Heart left ventricle (tissue), 16 donors: ENCODE measurements at regions of chr12 and their contacts with region 1.

Region 1: GRCh38 chr12:57452937-57453509 is 2.1 kb upstream of the INHBE start:
- DNase-seq: peak; percentile 83 to 89 (median 87)
- ATAC-seq: peak; percentile 75 to 86 (median 82)
- H3K4me3 ChIP-seq: no peak overlapping the region
- H3K27ac ChIP-seq: peak overlapping the region; percentile 61 to 96 (median 84)
- H3K4me1 ChIP-seq: peaks cover 0 to 31% (median 12%) of the 10 kb centered on the region in 12 donors
- H3K27me3 ChIP-seq: no peaks in the 10 kb centered on the region
- CTCF ChIP-seq: peak; percentile 79 to 96 (median 90)
- POLR2A ChIP-seq: no peak

Region 2: DNA sequence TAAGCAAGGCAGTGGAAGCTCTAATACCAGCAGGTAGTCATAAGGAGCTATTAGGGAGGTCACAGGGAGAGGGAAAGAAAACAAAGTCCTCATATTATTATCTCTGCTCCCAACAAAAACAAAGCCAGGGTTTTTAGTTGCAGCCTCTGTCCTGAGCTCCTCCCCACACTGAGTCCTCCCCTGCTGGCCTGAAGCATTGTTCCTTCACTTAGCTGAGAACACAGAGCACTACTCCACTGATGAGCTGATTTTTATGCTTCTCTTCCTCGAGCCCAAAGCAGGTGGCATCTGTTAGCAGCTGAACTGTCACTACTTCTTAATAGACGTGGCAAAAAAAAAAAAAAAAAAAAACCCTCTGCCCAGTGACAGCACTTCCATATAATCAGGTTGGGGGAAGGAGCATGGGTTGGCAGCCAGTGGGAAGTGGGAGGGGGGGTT is 191.6 kb before region 1 on chr12:
- intact Hi-C with region 1: loop called in 9 of 10 experiments (anchors 2 to 5 kb)
- DNase-seq: no peak
- ATAC-seq: peak; percentile 40 to 55 (median 43)
- H3K4me3 ChIP-seq: no peak overlapping the region
- H3K27ac ChIP-seq: peak overlapping the region; percentile 51 to 89 (median 80)
- H3K4me1 ChIP-seq: peaks cover 0 to 57% (median 22%) of the 10 kb centered on the region in 12 donors
- H3K27me3 ChIP-seq: no peaks in the 10 kb centered on the region
- CTCF ChIP-seq: no peak
- POLR2A ChIP-seq: no peak

Region 3: GRCh38 chr12:57268264-57268663 is 184.8 kb before region 1 on chr12:
- intact Hi-C with region 1: loop called in 9 of 10 experiments (anchors 2 to 5 kb)
- DNase-seq: no peak
- ATAC-seq: no peak
- H3K4me3 ChIP-seq: no peak overlapping the region
- H3K27ac ChIP-seq: no peak overlapping the region
- H3K4me1 ChIP-seq: peaks cover 0 to 41% (median 17%) of the 10 kb centered on the region in 12 donors
- H3K27me3 ChIP-seq: no peaks in the 10 kb centered on the region
- CTCF ChIP-seq: no peak
- POLR2A ChIP-seq: no peak

Region 4: GRCh38 chr12:57309420-57309819 is 143.6 kb before region 1 on chr12:
- intact Hi-C with region 1: loop called (anchors 1 to 2 kb)
- DNase-seq: no peak
- ATAC-seq: no peak
- H3K4me3 ChIP-seq: no peak overlapping the region
- H3K27ac ChIP-seq: peak overlapping the region in 4 of 12 donors; percentile 7 to 47 (median 24)
- H3K4me1 ChIP-seq: peaks cover 0 to 21% (median 0%) of the 10 kb centered on the region in 12 donors
- H3K27me3 ChIP-seq: no peaks in the 10 kb centered on the region
- CTCF ChIP-seq: no peak
- POLR2A ChIP-seq: no peak

Region 5: DNA sequence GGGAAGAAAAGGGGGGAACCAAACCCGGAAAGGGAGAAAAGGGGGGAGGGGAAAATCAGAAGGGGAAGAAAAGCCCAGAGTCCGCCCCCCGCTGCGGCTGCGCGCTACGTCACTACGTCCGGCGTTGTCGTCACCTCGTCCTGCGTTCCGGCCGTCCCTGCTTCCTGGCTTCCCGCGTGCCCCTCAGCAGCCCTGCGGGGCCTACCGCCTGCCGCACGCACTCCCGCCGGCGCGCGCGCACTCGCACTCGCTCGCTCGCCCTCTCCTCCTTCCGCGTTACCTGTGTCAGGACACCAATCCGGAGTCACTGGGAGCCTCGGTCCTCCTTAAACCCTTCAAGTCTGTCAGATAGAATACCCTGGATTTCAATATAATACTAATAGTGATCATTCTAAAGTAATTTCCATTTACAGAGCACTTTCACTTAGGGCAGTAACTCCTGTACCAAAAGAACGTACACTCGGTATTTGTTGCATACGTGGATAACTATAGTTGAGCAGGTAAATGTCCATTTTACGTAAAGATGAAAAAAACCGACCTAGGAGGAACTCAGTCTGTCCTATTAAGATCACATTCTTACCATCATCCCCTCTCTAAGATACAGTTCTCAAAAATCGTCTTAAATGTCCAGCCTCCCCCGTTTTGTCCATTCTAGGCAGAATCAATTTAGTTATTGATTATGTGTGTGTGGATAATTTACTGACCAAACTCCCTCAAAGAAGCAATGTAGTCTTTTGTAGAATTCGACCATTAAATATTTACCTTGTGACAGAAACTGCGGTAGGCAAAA is 21.9 kb before region 1 on chr12 and contains the start of gene R3HDM2:
- intact Hi-C with region 1: loop called in 1 of 10 experiments (anchors 2 kb)
- DNase-seq: peak; percentile 95 to 98 (median 97)
- ATAC-seq: peak; percentile 91 to 99 (median 98)
- H3K4me3 ChIP-seq: peak within 1 kb of the TSS; percentile 40 to 93 (median 72)
- H3K27ac ChIP-seq: peak within 1 kb of the TSS; percentile 85 to 99 (median 93)
- H3K4me1 ChIP-seq: peaks cover 0 to 23% (median 11%) of the 10 kb centered on the region in 12 donors
- H3K27me3 ChIP-seq: no peaks in the 10 kb centered on the region
- CTCF ChIP-seq: no peak
- POLR2A ChIP-seq: peak in 1 of 2 donors; percentile 92
- total RNA-seq, gene R3HDM2: 33.1 to 102 (median 61.9) TPM